ENCODE measurements at regions of chr7 and their contacts with region 1.

Region 1: DNA sequence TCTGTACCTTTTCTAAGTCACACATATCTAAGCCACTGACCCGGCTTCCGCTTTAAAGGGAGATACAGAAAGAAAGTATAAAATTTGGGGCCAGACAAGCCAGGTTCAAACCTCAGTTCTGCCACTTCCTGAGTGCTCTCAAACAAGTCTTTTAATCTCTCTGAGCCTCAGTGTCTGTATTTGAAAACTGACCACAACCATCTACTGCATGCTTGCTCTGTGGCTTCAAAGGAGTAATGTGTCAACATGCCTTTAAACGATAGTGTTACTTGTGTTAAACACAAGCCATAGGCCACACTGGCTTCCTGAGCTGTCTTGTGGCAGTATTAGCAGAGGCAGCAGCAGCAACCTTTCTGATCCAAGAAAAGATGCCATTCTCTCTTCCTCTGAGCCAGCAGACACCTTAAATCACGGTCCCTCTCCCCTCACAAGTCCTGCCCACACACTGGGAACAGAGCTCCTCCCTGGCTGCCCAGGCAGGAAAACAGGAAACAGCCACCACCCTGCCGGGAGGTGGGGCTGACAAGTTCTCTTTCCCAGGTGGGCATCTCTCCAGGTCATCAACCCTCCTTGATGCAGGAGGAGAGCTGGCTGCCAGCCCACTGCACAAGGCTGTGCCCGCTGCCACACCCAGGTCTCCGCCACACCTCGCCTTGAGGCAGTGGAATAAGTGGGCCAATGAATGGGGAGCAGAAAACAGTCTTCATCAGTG is 10.7 kb downstream of the HIP1 start:
- DNase-seq: peak; percentile 45 to 84
- ATAC-seq: peak; percentile 80 to 92 (median 89)
- H3K4me3 ChIP-seq: no peak overlapping the region
- H3K4me3 Mint-ChIP-seq: peak overlapping the region; percentile 78
- H3K27ac ChIP-seq: peak overlapping the region; percentile 70
- H3K27ac Mint-ChIP-seq: peak overlapping the region; percentile 72 to 92
- H3K4me1 ChIP-seq: peaks cover 92% of the 10 kb centered on the region
- H3K4me1 Mint-ChIP-seq: peaks cover 53 to 55% of the 10 kb centered on the region in 2 donors
- H3K27me3 ChIP-seq: no peaks in the 10 kb centered on the region
- H3K27me3 Mint-ChIP-seq: peaks cover 0 to 2% of the 10 kb centered on the region in 2 donors
- CTCF ChIP-seq: no peak

Region 2: DNA sequence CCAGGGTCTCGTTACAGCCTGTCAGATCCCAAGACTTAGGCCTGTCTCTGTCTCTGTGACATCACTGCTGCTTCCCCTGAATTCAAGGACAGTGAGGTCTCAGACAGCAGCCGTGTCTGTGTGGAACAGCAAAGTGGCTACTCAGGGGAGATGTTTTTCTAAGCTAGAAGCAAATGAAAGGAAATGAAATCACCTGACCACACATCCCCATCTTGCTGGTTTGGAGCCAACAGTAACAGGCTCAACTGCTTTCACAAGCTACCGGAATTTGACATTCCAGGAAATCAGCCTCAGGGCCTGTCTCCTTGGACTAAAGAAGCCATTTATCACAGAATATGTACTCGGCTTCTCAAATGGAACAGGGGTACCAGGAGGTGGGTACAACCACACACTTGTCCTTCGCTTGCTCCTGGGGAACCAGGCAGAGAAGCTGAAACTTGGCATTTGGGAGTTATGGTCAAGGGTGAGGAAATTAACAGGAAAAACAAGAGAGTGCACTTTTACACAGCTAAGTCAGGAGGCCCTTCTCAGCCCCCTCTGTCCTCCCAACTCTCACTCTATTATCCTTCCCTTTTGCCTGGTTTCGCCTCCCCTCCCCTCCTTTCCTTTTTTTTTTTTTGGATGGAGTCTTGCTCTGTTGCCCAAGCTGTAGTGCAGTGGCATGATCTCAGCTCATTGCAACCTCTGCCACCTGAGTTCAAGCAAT is 162.8 kb before region 1 on chr7:
- intact Hi-C with region 1: no loop called
- DNase-seq: no peak
- ATAC-seq: no peak
- H3K4me3 ChIP-seq: no peak overlapping the region
- H3K4me3 Mint-ChIP-seq: no peak overlapping the region
- H3K27ac ChIP-seq: no peak overlapping the region
- H3K27ac Mint-ChIP-seq: no peak overlapping the region
- H3K4me1 ChIP-seq: no peaks in the 10 kb centered on the region
- H3K4me1 Mint-ChIP-seq: no peaks in the 10 kb centered on the region
- H3K27me3 ChIP-seq: no peaks in the 10 kb centered on the region
- H3K27me3 Mint-ChIP-seq: no peaks in the 10 kb centered on the region
- CTCF ChIP-seq: no peak

Region 3: GRCh38 chr7:75776295-75776971 is 48.4 kb after region 1 on chr7:
- intact Hi-C with region 1: loop called (anchors 1 kb)
- DNase-seq: peak; percentile 30 to 67
- ATAC-seq: peak; percentile 75 to 92 (median 91)
- H3K4me3 ChIP-seq: no peak overlapping the region
- H3K4me3 Mint-ChIP-seq: peak overlapping the region; percentile 51
- H3K27ac ChIP-seq: peak overlapping the region; percentile 16
- H3K27ac Mint-ChIP-seq: peak overlapping the region; percentile 63 to 82
- H3K4me1 ChIP-seq: peaks cover 20% of the 10 kb centered on the region
- H3K4me1 Mint-ChIP-seq: peaks cover 18 to 34% of the 10 kb centered on the region in 2 donors
- H3K27me3 ChIP-seq: no peaks in the 10 kb centered on the region
- H3K27me3 Mint-ChIP-seq: peaks cover 0 to 9% of the 10 kb centered on the region in 2 donors
- CTCF ChIP-seq: no peak